ENCODE measurements at regions of chr7 and their contacts with region 1.

Region 1: DNA sequence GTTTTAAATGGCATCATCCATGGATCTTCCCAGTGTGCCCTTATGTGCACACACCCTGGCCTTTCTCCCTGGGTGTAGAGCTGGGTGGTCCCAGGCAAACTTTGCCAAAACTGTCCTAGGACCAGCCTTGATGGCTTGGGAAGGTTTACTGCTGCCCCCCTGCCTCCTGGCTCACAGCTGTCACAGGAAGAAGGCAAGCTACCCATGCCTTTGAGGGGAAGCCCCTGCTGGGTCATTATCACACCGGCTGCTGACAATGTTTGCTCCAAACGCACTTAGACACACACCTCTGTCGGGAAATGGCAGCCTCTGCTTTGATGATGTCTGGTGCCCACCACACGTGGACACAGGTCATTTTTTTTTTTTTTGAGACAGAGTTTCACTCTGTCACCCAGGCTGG is 25.2 kb upstream of the FIGNL1 start:
- DNase-seq: no peak
- ATAC-seq: no peak
- H3K4me3 ChIP-seq: no peak overlapping the region
- H3K27ac ChIP-seq: no peak overlapping the region
- H3K4me1 ChIP-seq: peaks cover 5% of the 10 kb centered on the region
- H3K27me3 ChIP-seq: no peaks in the 10 kb centered on the region
- CTCF ChIP-seq: no peak

Region 2: GRCh38 chr7:50153148-50153547 is 322.2 kb before region 1 on chr7:
- intact Hi-C with region 1: no loop called
- DNase-seq: no peak
- ATAC-seq: no peak
- H3K4me3 ChIP-seq: no peak overlapping the region
- H3K27ac ChIP-seq: no peak overlapping the region
- H3K4me1 ChIP-seq: no peaks in the 10 kb centered on the region
- H3K27me3 ChIP-seq: no peaks in the 10 kb centered on the region
- CTCF ChIP-seq: no peak

Region 3: GRCh38 chr7:50426280-50427045 is 48.9 kb before region 1 on chr7:
- intact Hi-C with region 1: no loop called
- DNase-seq: no peak
- ATAC-seq: no peak
- H3K4me3 ChIP-seq: no peak overlapping the region
- H3K27ac ChIP-seq: no peak overlapping the region
- H3K4me1 ChIP-seq: no peaks in the 10 kb centered on the region
- H3K27me3 ChIP-seq: no peaks in the 10 kb centered on the region
- CTCF ChIP-seq: no peak

Region 4: DNA sequence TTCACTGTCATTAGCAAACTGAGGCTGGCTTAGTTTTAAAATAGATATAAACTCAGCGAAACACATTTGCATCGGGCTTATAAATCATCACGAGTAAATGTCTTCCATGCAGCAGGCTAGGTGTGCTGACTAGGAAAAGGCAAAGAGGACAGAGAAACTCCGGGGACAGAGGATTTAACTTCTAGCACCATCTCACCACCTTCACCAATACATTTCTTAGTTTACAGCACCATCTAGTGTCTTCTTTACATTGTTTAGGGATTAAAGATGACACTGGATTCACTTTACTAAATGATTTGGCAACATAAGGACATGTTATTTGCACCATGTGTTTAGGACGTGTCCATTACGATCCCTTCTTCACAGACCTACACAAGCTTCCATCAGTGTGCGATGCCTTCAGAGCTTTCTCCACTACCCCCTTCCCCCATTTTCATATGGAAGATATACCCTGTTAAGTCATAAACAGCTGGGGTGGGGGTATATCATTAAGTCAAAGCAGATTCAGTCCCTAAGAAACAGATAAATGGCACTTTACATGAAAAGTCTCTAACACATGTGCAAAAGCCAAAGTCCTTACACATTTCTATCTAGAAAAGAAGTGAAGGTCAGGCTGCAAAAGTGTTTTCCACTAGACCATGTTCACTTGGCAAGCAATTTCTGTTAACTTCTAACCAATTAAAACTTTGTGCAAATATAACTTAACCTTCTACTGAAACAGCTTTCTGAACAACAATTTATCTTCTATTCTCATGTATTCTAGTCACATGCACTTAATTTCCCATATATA is 204.1 kb after region 1 on chr7:
- intact Hi-C with region 1: loop called (anchors 10 kb)
- DNase-seq: no peak
- ATAC-seq: peak; percentile 34
- H3K4me3 ChIP-seq: no peak overlapping the region
- H3K27ac ChIP-seq: no peak overlapping the region
- H3K4me1 ChIP-seq: peaks cover 35% of the 10 kb centered on the region
- H3K27me3 ChIP-seq: no peaks in the 10 kb centered on the region
- CTCF ChIP-seq: peak; percentile 34

Region 5: DNA sequence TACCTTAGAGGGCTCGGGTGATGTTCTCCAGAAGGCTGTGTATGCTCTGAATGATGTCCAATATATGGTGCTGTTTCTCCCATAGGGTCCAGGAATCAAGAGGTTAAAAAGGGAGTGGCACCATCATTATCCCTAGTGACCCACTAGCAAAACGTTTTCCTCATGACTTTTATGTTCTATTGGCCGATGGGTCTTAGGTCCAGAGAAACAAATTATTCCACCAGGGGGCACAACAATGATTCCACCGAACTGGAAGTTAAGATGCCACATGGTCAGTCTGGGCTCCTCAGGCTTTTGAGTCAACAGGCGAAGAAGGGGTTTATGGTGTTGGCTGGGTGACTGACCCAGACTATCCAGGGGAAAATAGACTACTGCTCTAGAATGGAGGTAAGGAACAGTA is 585.2 kb after region 1 on chr7:
- intact Hi-C with region 1: no loop called
- DNase-seq: no peak
- ATAC-seq: no peak
- H3K4me3 ChIP-seq: no peak overlapping the region
- H3K27ac ChIP-seq: no peak overlapping the region
- H3K4me1 ChIP-seq: no peaks in the 10 kb centered on the region
- H3K27me3 ChIP-seq: no peaks in the 10 kb centered on the region
- CTCF ChIP-seq: peak; percentile 12

Measured in upper lobe of right lung (tissue), 1 donor.